Naive thymus-derived CD4-positive, alpha-beta T cell (primary cell): ENCODE measurements at regions of chr18 and their contacts with region 1.

Region 1: GRCh38 chr18:62324917-62325805 is at the start of gene TNFRSF11A:
- DNase-seq: peak; percentile 19 to 83 (median 46)
- ATAC-seq: peak; percentile 91
- H3K4me3 ChIP-seq: peak within 1 kb of the TSS; percentile 50
- H3K4me3 Mint-ChIP-seq: peak within 1 kb of the TSS; percentile 80 to 93 (median 84)
- H3K27ac ChIP-seq: no peak within 1 kb of the TSS
- H3K27ac Mint-ChIP-seq: peak within 1 kb of the TSS in 5 of 9 donors; percentile 15 to 73 (median 65)
- H3K4me1 ChIP-seq: peaks cover 14 to 17% of the 10 kb centered on the region in 2 donors
- H3K4me1 Mint-ChIP-seq: peaks cover 18 to 53% (median 34%) of the 10 kb centered on the region in 7 donors
- H3K27me3 ChIP-seq: peaks cover 12 to 20% of the 10 kb centered on the region in 2 donors
- H3K27me3 Mint-ChIP-seq: peaks cover 46 to 78% (median 70%) of the 10 kb centered on the region in 5 donors
- total RNA-seq, gene TNFRSF11A: 0.16 to 22.2 (median 0.68) TPM

Region 2: DNA sequence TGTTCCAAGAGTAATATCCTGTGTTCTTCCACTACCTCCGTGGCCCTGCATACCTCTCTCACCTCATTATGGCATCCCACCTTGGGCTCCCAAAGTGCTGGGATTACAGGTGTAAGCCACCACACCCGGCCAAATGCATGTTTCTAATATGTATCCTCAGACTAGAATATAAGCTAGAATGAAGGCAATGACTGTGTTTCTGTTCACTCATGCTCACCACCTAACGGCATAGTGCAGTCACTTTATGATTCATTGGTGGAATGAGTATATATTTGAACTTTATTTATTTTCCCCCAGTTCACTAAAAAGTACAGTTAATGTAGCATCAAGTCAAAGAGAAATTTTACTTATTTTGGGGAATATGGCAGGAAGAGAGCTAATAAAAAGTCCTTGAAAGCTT is 149.6 kb before region 1 on chr18:
- CTCF ChIA-PET with region 1: no interaction called
- POLR2A ChIA-PET with region 1: no interaction called
- intact Hi-C with region 1: no loop called
- DNase-seq: no peak
- ATAC-seq: no peak
- H3K4me3 ChIP-seq: no peak overlapping the region
- H3K4me3 Mint-ChIP-seq: no peak overlapping the region
- H3K27ac ChIP-seq: no peak overlapping the region
- H3K27ac Mint-ChIP-seq: no peak overlapping the region
- H3K4me1 ChIP-seq: no peaks in the 10 kb centered on the region
- H3K4me1 Mint-ChIP-seq: peaks cover 0 to 28% (median 19%) of the 10 kb centered on the region in 7 donors
- H3K27me3 ChIP-seq: no peaks in the 10 kb centered on the region
- H3K27me3 Mint-ChIP-seq: no peaks in the 10 kb centered on the region

Region 3: GRCh38 chr18:62346333-62347090 is 21.4 kb after region 1 on chr18:
- CTCF ChIA-PET with region 1: no interaction called
- POLR2A ChIA-PET with region 1: no interaction called
- intact Hi-C with region 1: loop called in 1 of 2 experiments (anchors 2 kb)
- DNase-seq: no peak
- ATAC-seq: no peak
- H3K4me3 ChIP-seq: no peak overlapping the region
- H3K4me3 Mint-ChIP-seq: peak overlapping the region in 1 of 10 donors; percentile 72
- H3K27ac ChIP-seq: no peak overlapping the region
- H3K27ac Mint-ChIP-seq: peak overlapping the region in 3 of 9 donors; percentile 1 to 87 (median 42)
- H3K4me1 ChIP-seq: no peaks in the 10 kb centered on the region
- H3K4me1 Mint-ChIP-seq: peaks cover 0 to 26% (median 0%) of the 10 kb centered on the region in 7 donors
- H3K27me3 ChIP-seq: no peaks in the 10 kb centered on the region
- H3K27me3 Mint-ChIP-seq: peaks cover 0 to under 1% (median 0%) of the 10 kb centered on the region in 5 donors

Region 4: DNA sequence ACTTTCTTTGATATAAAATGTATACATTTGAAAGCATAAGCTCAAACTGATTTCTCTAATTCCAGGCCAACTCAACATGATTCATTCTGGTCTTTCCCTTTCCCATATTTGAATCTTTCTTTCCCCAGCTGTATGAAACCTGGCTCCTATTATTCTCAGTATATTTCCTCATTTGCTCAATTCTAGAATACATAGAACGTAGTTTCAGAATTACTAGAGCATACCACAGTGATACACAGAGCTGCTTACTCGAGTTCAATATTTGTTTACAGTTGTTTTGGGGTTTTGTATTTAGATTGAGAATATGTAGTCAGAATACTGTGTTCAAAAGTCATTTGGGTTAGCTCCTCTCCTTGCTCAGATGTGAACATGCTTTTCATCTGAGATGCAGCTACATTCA is 42.9 kb after region 1 on chr18:
- CTCF ChIA-PET with region 1: no interaction called
- POLR2A ChIA-PET with region 1: no interaction called
- intact Hi-C with region 1: loop called in 1 of 2 experiments (anchors 5 kb)
- DNase-seq: no peak
- ATAC-seq: no peak
- H3K4me3 ChIP-seq: no peak overlapping the region
- H3K4me3 Mint-ChIP-seq: peak overlapping the region in 1 of 10 donors; percentile 36
- H3K27ac ChIP-seq: no peak overlapping the region
- H3K27ac Mint-ChIP-seq: peak overlapping the region in 1 of 9 donors; percentile 83
- H3K4me1 ChIP-seq: no peaks in the 10 kb centered on the region
- H3K4me1 Mint-ChIP-seq: peaks cover 0 to 46% (median 3%) of the 10 kb centered on the region in 7 donors
- H3K27me3 ChIP-seq: no peaks in the 10 kb centered on the region
- H3K27me3 Mint-ChIP-seq: peaks cover 0 to 3% (median 0%) of the 10 kb centered on the region in 5 donors

Region 5: GRCh38 chr18:62399276-62399675 is 74.1 kb after region 1 on chr18:
- CTCF ChIA-PET with region 1: no interaction called
- POLR2A ChIA-PET with region 1: no interaction called
- intact Hi-C with region 1: no loop called
- DNase-seq: no peak
- ATAC-seq: peak; percentile 57
- H3K4me3 ChIP-seq: no peak overlapping the region
- H3K4me3 Mint-ChIP-seq: no peak overlapping the region
- H3K27ac ChIP-seq: no peak overlapping the region
- H3K27ac Mint-ChIP-seq: no peak overlapping the region
- H3K4me1 ChIP-seq: no peaks in the 10 kb centered on the region
- H3K4me1 Mint-ChIP-seq: peaks cover 0 to 41% (median 0%) of the 10 kb centered on the region in 7 donors
- H3K27me3 ChIP-seq: no peaks in the 10 kb centered on the region
- H3K27me3 Mint-ChIP-seq: peaks cover 0 to 4% (median 0%) of the 10 kb centered on the region in 5 donors